Activated naive CD4-positive, alpha-beta T cell treated with anti-CD3 and anti-CD28 coated beads for 36 hours (primary cell): ENCODE measurements at regions of chr18 and their contacts with region 1.

Region 1: GRCh38 chr18:22169007-22169864 is at the start of gene GATA6:
- DNase-seq: peak; percentile 51
- H3K4me3 Mint-ChIP-seq: peak within 1 kb of the TSS; percentile 75
- H3K27ac Mint-ChIP-seq: no peak within 1 kb of the TSS
- H3K4me1 Mint-ChIP-seq: peaks cover 23% of the 10 kb centered on the region
- H3K27me3 Mint-ChIP-seq: peaks cover 70% of the 10 kb centered on the region
- total RNA-seq, gene GATA6: not detected

Region 2: GRCh38 chr18:21242141-21242779 is 927.0 kb before region 1 on chr18 and contains the start of gene GREB1L:
- CTCF ChIA-PET with region 1: no interaction called
- intact Hi-C with region 1: loop called (anchors 5 kb)
- DNase-seq: peak; percentile 40
- H3K4me3 Mint-ChIP-seq: peak within 1 kb of the TSS; percentile 32
- H3K27ac Mint-ChIP-seq: no peak within 1 kb of the TSS
- H3K4me1 Mint-ChIP-seq: peaks cover 14% of the 10 kb centered on the region
- H3K27me3 Mint-ChIP-seq: peaks cover 49% of the 10 kb centered on the region
- total RNA-seq, gene GREB1L: not detected

Region 3: DNA sequence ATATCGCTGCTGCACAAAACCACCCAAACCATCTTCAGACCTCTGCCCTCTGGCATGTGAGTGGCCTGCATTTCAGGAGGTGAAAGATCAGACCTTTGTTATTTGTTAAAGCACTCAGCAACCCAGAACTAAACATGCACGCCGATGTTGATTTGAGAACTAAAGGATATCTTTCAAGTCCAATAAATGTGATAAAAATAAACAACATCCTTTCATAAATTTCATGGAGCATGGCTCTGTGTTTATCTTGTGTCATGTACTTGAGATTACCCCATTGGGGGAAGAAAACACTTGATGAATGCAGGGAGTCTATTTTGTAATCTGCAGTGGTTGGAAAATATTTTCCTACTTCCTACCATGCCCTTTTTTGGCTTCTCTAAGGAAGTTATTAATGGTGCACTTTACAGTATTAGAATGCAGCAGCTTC is 70.7 kb before region 1 on chr18:
- CTCF ChIA-PET with region 1: no interaction called
- intact Hi-C with region 1: no loop called
- DNase-seq: no peak
- H3K4me3 Mint-ChIP-seq: no peak overlapping the region
- H3K27ac Mint-ChIP-seq: no peak overlapping the region
- H3K4me1 Mint-ChIP-seq: no peaks in the 10 kb centered on the region
- H3K27me3 Mint-ChIP-seq: peaks cover 3% of the 10 kb centered on the region

Region 4: GRCh38 chr18:22348521-22349316 is 179.5 kb after region 1 on chr18:
- CTCF ChIA-PET with region 1: no interaction called
- intact Hi-C with region 1: loop called (anchors 5 kb)
- DNase-seq: no peak
- H3K4me3 Mint-ChIP-seq: peak overlapping the region; percentile 39
- H3K27ac Mint-ChIP-seq: no peak overlapping the region
- H3K4me1 Mint-ChIP-seq: peaks cover 4% of the 10 kb centered on the region
- H3K27me3 Mint-ChIP-seq: peaks cover 44% of the 10 kb centered on the region

Region 5: GRCh38 chr18:22563098-22563707 is 394.0 kb after region 1 on chr18:
- CTCF ChIA-PET with region 1: no interaction called
- intact Hi-C with region 1: loop called (anchors 1 kb)
- DNase-seq: no peak
- H3K4me3 Mint-ChIP-seq: no peak overlapping the region
- H3K27ac Mint-ChIP-seq: no peak overlapping the region
- H3K4me1 Mint-ChIP-seq: peaks cover 2% of the 10 kb centered on the region
- H3K27me3 Mint-ChIP-seq: peaks cover 23% of the 10 kb centered on the region

Region 6: DNA sequence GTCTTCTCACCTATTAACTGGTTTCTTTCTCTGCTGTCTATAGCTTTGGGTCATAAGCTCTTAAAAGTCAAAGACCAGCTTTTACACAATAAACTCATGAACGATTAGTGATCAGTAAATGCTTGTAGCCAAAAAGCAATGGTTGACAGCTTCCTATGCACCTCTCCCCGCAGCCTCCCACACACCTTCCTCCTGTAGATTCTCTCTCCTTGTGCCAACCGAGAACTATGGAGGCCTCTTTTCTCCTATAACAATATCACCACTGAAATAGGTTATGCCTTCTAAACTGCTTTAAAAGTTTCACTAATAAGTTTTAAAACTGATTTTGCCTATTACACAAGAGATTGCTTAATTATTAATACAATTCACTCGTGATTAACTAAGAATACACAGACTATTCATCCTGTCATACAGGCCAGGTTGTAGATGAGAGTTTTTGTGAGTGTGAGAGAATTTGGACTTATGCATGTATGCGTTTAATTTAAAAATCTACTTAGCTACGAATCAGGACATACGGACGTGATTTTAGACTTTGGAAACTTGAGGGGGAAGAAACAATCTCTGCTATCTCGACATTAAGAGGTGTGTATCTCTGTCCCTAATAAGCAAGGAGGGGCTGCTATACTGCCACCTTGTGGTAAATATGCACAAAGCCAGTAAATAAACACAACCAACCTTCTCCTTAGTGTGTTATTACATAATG is 534.8 kb after region 1 on chr18:
- CTCF ChIA-PET with region 1: no interaction called
- intact Hi-C with region 1: loop called (anchors 2 kb)
- DNase-seq: peak; percentile 13
- H3K4me3 Mint-ChIP-seq: no peak overlapping the region
- H3K27ac Mint-ChIP-seq: no peak overlapping the region
- H3K4me1 Mint-ChIP-seq: no peaks in the 10 kb centered on the region
- H3K27me3 Mint-ChIP-seq: peaks cover 6% of the 10 kb centered on the region